Posterior cingulate gyrus (tissue), 11 donors: ENCODE measurements at regions of chr9 and their contacts with region 1.

Region 1: GRCh38 chr9:92147030-92147851 is 32.0 kb upstream of the SPTLC1 start:
- DNase-seq: no peak

Region 2: DNA sequence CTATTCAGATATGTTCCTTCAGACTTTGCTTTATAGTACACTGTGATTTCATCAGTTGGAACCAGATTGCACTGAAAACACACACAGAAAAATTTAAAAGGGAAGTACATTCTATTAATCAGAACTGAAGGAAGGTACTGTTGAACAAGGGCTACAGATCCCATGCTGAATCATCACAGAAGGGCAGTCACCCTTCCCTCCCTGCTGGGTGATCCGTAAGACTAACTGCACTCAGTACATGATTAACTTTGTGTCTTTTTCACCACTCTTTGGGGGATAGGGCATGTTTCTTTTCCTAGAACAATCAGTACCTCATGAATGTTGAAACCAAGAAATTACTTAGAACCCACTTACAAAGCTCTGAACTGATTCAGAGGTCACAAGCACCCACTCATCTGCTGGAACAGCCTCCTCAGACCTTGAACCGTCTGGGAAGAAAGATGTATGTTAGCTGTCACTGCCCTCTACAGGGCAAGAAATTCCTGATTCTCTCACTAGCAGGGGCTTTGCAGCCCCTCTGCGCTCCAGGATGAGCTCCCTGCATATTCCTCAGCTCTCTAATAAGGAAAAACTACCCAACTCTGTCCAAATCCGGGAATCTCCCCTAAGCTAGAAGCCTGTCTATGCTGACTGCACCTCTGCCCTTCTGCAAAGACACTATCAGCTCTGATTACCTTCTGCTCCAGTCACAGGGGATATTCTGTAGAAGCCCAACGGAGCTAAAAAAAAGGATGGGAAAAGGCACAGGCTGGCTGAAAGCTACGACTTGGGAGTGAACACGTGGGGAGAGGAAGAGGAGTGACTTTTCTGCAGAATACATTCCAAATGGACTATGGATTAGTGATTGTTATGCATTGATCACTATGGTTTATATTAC is 95.3 kb after region 1 on chr9:
- intact Hi-C with region 1: loop called (anchors 5 kb)
- DNase-seq: no peak

Region 3: DNA sequence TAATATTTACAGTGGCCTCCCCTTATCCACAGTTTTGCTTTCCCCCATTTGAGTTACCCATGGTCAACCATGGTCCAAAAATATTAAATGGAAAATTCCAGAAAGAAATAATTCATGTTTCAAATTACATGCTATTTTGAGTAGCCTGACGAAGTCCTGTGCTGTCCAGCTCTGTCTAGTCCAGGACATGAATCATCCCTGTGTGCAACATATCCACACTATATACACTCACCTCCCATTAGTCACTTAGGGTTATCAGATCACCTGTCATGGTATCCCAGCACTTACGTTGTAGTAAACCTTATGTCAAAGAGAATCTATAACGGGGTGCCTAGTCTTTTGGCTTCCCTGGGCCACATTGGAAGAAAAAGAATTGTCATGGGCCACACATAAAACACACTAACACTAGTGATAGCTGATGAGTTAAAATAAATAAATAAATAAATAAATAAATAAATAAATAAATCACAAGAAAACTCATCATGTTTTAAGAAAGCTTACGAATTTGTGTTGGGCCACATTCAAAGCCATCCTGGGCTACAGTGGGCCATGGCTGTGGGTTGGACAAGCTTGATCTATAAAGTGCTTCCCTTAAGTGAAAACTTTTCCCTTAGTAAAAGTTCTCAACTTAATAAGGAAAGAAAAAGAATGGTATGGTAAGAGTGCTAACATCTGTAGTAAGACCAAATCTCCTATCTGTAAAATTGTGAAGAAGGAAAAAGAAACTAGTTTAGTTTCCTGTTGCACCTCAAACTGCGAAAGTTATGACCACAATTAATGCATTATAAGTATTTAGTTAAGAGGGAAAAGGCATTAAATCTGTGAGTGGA is 292.9 kb after region 1 on chr9:
- intact Hi-C with region 1: no loop called
- DNase-seq: no peak